MCF 10A (cell line): ENCODE measurements at regions of chr1 and their contacts with region 1.

Region 1: GRCh38 chr1:175824079-175824478 is 80.7 kb upstream of the TNR start:
- DNase-seq: peak; percentile 54
- H3K4me3 Mint-ChIP-seq: no peak overlapping the region
- H3K27ac Mint-ChIP-seq: no peak overlapping the region
- H3K4me1 Mint-ChIP-seq: peaks cover 21% of the 10 kb centered on the region
- H3K27me3 Mint-ChIP-seq: no peaks in the 10 kb centered on the region
- CTCF ChIP-seq: peak; percentile 45

Region 2: DNA sequence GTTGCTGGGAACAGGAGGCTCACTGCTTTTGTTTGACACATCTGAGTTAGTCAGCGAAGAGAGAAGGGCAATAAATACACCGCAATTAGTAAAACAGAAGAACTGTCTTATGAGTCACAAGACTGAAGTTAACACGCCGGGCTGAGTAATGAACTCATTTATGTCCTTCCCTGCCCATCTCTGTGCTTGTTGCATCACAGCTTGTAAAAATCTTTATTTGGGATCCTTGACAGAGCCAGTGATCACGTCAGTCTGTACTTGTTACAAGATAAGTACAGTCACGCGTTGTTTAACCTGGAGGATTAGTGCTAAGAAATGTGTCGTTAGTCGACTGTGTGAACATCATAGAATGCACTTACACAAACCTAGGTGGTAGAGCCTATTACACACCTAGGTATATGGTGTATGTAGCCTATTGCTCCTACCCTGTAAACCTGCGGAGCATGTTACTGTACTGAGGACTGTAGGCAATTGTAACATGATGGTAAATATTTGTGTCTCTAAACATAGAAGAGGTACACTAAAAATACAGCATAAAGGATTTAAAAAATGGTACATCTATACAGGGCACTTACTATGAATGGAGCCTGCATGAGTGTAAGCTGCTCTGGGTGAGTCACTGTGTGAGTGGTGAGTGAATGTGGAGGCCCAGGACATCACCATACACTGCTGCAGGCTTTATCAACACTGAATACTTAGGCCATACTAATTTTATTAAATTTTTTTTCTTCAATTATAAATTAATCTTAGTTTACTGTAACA is 352.9 kb before region 1 on chr1:
- CTCF ChIA-PET with region 1: interaction called, 4 read pairs
- POLR2A ChIA-PET with region 1: interaction called, 3 read pairs
- intact Hi-C with region 1: loop called (anchors 10 kb)
- DNase-seq: peak; percentile 95
- H3K4me3 Mint-ChIP-seq: no peak overlapping the region
- H3K27ac Mint-ChIP-seq: peak overlapping the region; percentile 65
- H3K4me1 Mint-ChIP-seq: peaks cover 30% of the 10 kb centered on the region
- H3K27me3 Mint-ChIP-seq: peaks cover 72% of the 10 kb centered on the region
- CTCF ChIP-seq: no peak